ENCODE measurements at regions of chr2 and their contacts with region 1.

Region 1: GRCh38 chr2:135913727-135914365 is 37.6 kb upstream of the MCM6 start:
- DNase-seq: peak; percentile 73
- H3K4me3 ChIP-seq: no peak overlapping the region
- H3K27ac ChIP-seq: peak overlapping the region; percentile 5
- H3K4me1 ChIP-seq: peaks cover 27% of the 10 kb centered on the region
- CTCF ChIP-seq: peak; percentile 96

Region 2: GRCh38 chr2:136075466-136075865 is 161.6 kb after region 1 on chr2:
- CTCF ChIA-PET with region 1: no interaction called
- POLR2A ChIA-PET with region 1: no interaction called
- intact Hi-C with region 1: loop called (anchors 1 kb)
- DNase-seq: peak; percentile 84
- H3K4me3 ChIP-seq: peak overlapping the region; percentile 25
- H3K27ac ChIP-seq: no peak overlapping the region
- H3K4me1 ChIP-seq: peaks cover 50% of the 10 kb centered on the region
- CTCF ChIP-seq: peak; percentile 54

Region 3: DNA sequence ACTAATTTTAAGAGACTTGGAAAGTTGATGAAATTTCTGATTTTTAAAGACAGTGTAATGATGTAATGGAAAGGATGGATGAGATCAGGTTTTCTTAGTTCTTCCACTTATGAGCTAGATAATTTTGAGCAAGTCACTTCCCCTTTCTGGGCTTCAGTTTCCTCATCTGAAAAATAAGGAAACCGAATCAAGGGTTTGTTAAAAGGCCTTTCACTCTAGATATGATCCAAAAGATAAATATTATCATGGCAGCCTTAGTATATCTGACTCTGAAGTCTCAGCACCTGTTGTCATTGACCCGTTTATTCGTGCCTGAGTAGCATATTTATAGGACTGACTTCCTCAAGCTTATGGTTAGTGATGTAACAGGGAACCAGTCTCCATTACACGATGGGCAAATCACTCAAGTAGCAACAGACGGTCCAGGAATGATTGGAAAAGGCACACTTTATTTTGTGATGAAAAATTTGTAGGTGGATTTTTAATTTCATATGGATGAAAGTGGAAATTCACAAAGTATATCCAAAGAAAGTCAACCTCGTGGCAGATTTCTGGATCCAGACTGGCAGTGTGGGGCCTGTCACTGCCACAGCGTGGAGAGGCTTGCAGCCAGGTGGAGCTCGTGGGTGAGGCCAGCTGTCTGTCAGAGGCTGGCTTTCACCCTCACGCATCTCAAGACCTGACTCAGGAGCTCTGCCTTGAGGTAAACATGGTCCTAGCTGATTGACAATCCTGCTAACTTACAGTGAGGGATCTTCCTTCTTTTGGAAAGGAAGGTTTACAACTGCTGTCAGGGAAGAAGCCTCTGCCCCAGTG is 342.0 kb after region 1 on chr2:
- CTCF ChIA-PET with region 1: no interaction called
- POLR2A ChIA-PET with region 1: no interaction called
- intact Hi-C with region 1: loop called (anchors 5 kb)
- DNase-seq: peak; percentile 85
- H3K4me3 ChIP-seq: peak overlapping the region; percentile 26
- H3K27ac ChIP-seq: peak overlapping the region; percentile 79
- H3K4me1 ChIP-seq: peaks cover 72% of the 10 kb centered on the region
- CTCF ChIP-seq: peak; percentile 80

Region 4: DNA sequence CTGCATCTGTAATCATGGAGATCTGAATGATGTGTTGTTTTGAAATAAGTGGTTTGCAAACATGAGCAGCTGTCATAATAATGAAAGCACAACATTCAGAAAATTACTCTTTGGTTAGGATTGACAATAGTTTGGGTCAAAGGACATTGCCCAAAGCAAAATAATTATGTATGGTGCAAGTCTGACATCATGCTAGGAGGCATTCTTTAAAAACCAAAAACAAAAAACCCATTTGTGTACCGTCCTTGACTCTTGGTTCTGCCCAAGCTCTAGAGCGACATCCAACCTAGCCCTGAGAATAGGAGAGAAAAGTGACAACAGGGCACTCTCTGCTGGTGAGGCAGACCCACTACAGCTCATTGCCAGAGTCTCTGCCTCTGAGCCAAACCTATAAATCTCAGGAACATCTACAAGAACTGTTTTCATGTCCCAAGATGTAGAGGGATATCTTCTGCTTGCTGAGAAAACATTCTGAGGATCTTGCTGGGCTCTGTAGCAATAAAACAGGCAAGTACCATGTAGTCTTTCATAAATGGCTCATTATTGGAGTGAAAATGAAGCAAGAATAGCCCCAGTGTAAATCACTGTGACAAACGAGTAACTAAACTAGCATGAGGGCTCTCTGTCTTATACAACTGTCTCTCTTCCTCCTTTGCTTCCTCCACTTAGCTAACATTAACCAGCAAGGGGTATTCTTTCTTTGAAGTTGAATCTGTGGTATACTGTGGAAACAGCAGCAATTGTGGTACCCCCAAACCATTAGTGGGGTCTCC is 470.9 kb after region 1 on chr2:
- CTCF ChIA-PET with region 1: interaction called, 4 read pairs
- POLR2A ChIA-PET with region 1: interaction called, 18 read pairs
- intact Hi-C with region 1: loop called (anchors 1 kb)
- DNase-seq: peak; percentile 87
- H3K4me3 ChIP-seq: peak overlapping the region; percentile 19
- H3K27ac ChIP-seq: peak overlapping the region; percentile 93
- H3K4me1 ChIP-seq: peaks cover 87% of the 10 kb centered on the region
- CTCF ChIP-seq: peak; percentile 99